ENCODE measurements at regions of chr1 and their contacts with region 1.

Region 1: DNA sequence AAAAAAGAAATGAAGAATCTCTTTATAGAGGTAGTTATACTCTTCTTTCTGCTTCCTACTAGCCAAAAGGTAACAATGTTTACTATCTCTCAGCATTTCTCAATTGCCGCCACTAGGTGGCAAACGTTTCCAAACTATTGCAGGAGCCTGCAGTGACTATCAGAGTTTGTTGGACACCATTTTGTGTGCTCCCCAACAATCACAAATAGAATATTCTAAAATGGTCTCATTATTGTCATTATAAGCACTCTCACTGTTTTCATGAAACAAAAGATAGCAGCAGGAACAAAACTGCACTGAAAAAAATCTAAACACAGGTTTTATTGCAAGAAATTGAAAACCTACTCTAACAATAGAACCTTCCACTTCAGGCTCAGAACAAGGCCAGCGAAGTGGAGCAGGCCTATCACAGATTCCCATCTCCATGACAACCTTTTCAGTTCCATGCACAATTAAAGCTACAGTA is 83.9 kb upstream of the PLPPR4 start:
- H3K4me3 ChIP-seq: no peak overlapping the region
- H3K27ac ChIP-seq: no peak overlapping the region
- H3K4me1 ChIP-seq: no peaks in the 10 kb centered on the region
- CTCF ChIP-seq: peak; percentile 33; the same call in 1 of the 2 replicates

Region 2: GRCh38 chr1:99707535-99708142 is 527.3 kb after region 1 on chr1:
- CTCF ChIA-PET with region 1: interaction called, 15 read pairs
- POLR2A ChIA-PET with region 1: no interaction called
- H3K4me3 ChIP-seq: no peak overlapping the region
- H3K27ac ChIP-seq: no peak overlapping the region
- H3K4me1 ChIP-seq: no peaks in the 10 kb centered on the region
- CTCF ChIP-seq: peak; percentile 45; the same call in 1 of the 2 replicates